Heart left ventricle (tissue), 16 donors: ENCODE measurements at regions of chr13 and their contacts with region 1.

Region 1: DNA sequence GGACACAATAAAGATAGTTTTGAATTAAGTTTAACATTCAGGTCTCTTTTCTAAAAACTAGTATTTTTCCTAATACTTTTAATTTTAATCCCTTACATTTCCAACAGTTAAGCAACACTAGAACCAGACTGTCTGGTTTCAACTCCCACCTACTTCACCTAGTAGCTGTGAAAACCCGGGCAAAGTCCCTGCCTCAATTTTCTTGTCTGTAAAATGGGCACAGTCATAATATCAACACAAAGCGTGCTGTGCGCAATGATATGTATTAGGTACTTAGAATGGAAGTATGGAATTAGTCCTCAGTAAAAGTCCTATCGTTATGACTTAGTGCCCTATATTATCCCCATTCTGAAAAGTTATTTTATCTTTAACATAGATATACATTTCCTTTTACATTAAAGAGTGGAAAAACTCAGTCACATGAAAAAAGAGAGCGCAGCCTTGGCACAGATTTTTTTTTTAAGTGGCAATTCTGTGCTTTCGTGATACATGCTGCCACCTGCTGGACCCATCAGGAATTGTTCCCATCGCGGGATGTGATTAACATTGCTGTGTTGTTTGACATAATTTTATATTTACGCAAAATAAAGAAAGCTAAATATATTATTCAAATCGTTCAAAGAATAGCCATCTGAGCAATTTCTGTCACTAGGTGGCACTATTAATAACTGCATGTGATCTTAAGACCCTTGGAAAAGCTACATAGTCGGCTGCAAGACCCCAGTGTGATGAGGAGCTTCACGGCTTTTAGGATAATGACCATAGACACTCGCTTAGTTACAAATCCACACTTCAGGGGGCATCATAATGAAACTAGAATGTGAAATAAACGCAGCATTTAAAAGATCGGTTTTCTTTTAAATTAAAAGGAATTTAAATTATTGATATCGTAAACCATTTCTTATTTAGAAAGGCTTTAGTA is 59.9 kb downstream of the LIG4 start:
- DNase-seq: peak in 4 of 5 donors; percentile 22 to 41 (median 33)
- ATAC-seq: peak in 1 of 4 donors; percentile 41
- H3K4me3 ChIP-seq: no peak overlapping the region
- H3K27ac ChIP-seq: no peak overlapping the region
- H3K4me1 ChIP-seq: no peaks in the 10 kb centered on the region
- H3K27me3 ChIP-seq: no peaks in the 10 kb centered on the region
- CTCF ChIP-seq: peak; percentile 68 to 92 (median 84)
- POLR2A ChIP-seq: no peak

Region 2: DNA sequence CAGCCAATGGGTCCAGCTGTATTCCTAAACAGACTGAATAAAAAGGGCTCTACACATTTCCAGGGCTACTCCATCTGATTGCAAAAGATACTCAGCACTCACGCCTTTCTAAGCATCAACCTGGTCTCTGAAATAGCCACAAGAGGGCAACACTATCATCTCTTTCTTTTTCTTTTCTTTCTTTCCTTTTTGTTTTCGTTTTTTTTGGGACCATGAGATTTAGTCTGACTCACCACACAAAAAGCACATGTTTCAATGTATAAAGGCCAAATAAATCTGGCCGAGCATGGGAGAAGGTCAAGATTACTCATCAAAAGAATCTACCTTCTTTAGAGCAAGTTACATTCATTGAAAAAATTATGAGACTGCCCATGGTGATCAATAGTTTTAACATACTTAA is 781.9 kb before region 1 on chr13:
- intact Hi-C with region 1: loop called in 4 of 10 experiments (anchors 5 to 10 kb)
- DNase-seq: no peak
- ATAC-seq: no peak
- H3K4me3 ChIP-seq: no peak overlapping the region
- H3K27ac ChIP-seq: no peak overlapping the region
- H3K4me1 ChIP-seq: no peaks in the 10 kb centered on the region
- H3K27me3 ChIP-seq: no peaks in the 10 kb centered on the region
- CTCF ChIP-seq: peak in 7 of 12 donors; percentile 14 to 54 (median 45)
- POLR2A ChIP-seq: no peak